CD4-positive, alpha-beta T cell (primary cell): ENCODE measurements at regions of chr14 and their contacts with region 1.

Region 1: GRCh38 chr14:20682435-20683124 is 1.8 kb upstream of the RNASE4 start:
- DNase-seq: peak; percentile 62 to 93 (median 74)
- ATAC-seq: peak; percentile 60
- H3K4me3 ChIP-seq: peak overlapping the region; percentile 79
- H3K4me3 Mint-ChIP-seq: no peak overlapping the region
- H3K27ac ChIP-seq: peak overlapping the region; percentile 94 to 95
- H3K27ac Mint-ChIP-seq: no peak overlapping the region
- H3K4me1 ChIP-seq: peaks cover 53% of the 10 kb centered on the region
- H3K4me1 Mint-ChIP-seq: peaks cover 5% of the 10 kb centered on the region
- H3K27me3 ChIP-seq: no peaks in the 10 kb centered on the region
- H3K27me3 Mint-ChIP-seq: peaks cover 7% of the 10 kb centered on the region
- CTCF ChIP-seq: no peak

Region 2: GRCh38 chr14:20332788-20333493 is 349.6 kb before region 1 on chr14 and contains the start of gene CCNB1IP1:
- CTCF ChIA-PET with region 1: interaction called, 4 read pairs
- POLR2A ChIA-PET with region 1: interaction called, 17 read pairs
- intact Hi-C with region 1: no loop called
- DNase-seq: peak in 13 of 14 experiments; percentile 5 to 91 (median 26)
- ATAC-seq: peak; percentile 99
- H3K4me3 ChIP-seq: peak within 1 kb of the TSS; percentile 75
- H3K4me3 Mint-ChIP-seq: peak within 1 kb of the TSS; percentile 94
- H3K27ac ChIP-seq: peak within 1 kb of the TSS; percentile 3 to 59
- H3K27ac Mint-ChIP-seq: peak within 1 kb of the TSS; percentile 84
- H3K4me1 ChIP-seq: peaks cover 12% of the 10 kb centered on the region
- H3K4me1 Mint-ChIP-seq: peaks cover 34% of the 10 kb centered on the region
- H3K27me3 ChIP-seq: no peaks in the 10 kb centered on the region
- H3K27me3 Mint-ChIP-seq: no peaks in the 10 kb centered on the region
- CTCF ChIP-seq: no peak
- total RNA-seq, gene CCNB1IP1: 26.2 to 27.4 TPM

Region 3: DNA sequence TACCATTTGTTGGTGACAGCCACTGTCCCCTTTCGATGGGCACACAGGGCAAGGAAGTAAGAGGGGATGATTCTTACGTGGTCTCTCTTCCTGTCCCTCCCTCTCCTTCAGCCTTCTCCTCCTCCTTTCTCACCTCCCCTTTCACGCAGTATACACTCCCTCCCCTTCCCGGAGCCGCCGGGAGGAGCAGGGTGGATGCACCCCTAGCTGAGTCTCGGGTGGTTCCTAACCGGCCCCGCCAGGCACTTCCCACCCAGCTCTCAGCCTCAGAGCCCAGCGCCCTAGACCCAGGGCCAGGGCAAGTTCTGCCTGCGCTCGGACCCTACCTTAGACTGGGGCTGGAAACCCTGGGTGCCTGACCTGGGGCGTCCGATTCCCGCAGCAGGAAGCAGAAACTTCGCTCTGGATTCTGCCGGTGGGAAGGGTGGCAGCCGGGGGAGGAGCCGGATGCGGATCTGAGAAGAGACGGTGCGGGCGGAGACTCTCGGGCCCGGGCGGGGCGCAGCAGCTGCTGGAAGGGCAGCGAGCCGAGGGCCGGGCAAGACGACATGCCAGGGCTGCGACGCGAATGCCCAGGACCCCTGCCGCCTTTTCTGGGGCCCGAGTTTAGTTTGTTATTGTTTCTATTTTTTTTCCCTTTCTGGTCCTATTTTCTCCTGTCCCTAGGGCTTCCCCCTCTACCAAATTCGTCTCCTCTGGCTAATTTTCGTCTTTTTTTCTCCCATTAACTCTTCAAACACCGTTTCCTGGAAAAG is 269.4 kb before region 1 on chr14 and contains the start of gene TEP1:
- CTCF ChIA-PET with region 1: no interaction called
- POLR2A ChIA-PET with region 1: interaction called, 5 read pairs
- intact Hi-C with region 1: loop called in 1 of 2 experiments (anchors 5 kb)
- DNase-seq: peak; percentile 47 to 81 (median 66)
- ATAC-seq: peak; percentile 72
- H3K4me3 ChIP-seq: peak within 1 kb of the TSS; percentile 96
- H3K4me3 Mint-ChIP-seq: peak within 1 kb of the TSS; percentile 98
- H3K27ac ChIP-seq: peak within 1 kb of the TSS; percentile 80 to 90
- H3K27ac Mint-ChIP-seq: peak within 1 kb of the TSS; percentile 80
- H3K4me1 ChIP-seq: peaks cover 19% of the 10 kb centered on the region
- H3K4me1 Mint-ChIP-seq: peaks cover 49% of the 10 kb centered on the region
- H3K27me3 ChIP-seq: no peaks in the 10 kb centered on the region
- H3K27me3 Mint-ChIP-seq: no peaks in the 10 kb centered on the region
- CTCF ChIP-seq: no peak
- total RNA-seq, gene TEP1: 14.3 to 17.4 TPM

Region 4: DNA sequence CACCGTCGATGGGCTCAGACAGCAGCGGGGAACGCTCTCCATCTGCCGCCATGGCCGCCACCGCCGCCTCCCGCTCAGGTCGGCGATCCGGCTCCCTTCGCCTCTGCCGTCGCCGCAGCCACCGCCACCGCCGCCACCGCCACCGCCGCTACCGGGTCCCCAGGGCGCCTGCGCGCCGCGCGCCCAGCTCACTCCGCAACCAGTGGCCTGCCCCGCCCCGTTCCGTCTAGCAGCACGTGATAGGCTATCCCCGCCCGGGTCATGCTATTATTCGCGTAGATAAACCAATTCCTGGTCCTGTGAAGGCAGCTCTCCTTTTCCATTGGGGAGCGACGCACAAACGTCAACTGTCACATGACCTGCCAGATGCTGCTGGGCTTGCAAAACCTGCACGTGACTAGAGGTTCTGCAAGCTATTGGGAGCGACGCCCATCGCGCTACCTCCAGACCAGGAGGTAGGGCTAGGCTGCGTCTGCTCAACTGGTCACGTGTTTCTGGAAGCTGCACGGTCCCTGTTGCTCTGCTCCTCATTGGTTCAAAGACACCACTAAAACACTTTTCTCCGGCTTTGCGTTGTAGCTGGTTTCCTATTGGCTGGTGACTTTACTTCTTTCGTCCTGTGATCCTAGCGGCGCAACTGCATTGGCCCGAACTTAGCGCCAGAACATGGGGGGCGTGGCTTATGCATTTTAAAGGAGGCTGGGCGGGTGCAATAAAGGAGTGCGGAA is 221.1 kb before region 1 on chr14 and contains the start of gene PIP4P1:
- CTCF ChIA-PET with region 1: no interaction called
- POLR2A ChIA-PET with region 1: interaction called, 43 read pairs
- intact Hi-C with region 1: loop called in 1 of 2 experiments (anchors 2 kb)
- DNase-seq: peak; percentile 94 to 100 (median 97)
- ATAC-seq: peak; percentile 86
- H3K4me3 ChIP-seq: peak within 1 kb of the TSS; percentile 69
- H3K4me3 Mint-ChIP-seq: peak within 1 kb of the TSS; percentile 95
- H3K27ac ChIP-seq: peak within 1 kb of the TSS; percentile 94 to 97
- H3K27ac Mint-ChIP-seq: peak within 1 kb of the TSS; percentile 87
- H3K4me1 ChIP-seq: peaks cover 41% of the 10 kb centered on the region
- H3K4me1 Mint-ChIP-seq: peaks cover 26% of the 10 kb centered on the region
- H3K27me3 ChIP-seq: no peaks in the 10 kb centered on the region
- H3K27me3 Mint-ChIP-seq: no peaks in the 10 kb centered on the region
- CTCF ChIP-seq: no peak
- total RNA-seq, gene PIP4P1: 83.9 to 107 TPM

Region 5: GRCh38 chr14:20652996-20653975 is 29.3 kb before region 1 on chr14:
- CTCF ChIA-PET with region 1: interaction called, 4 read pairs
- POLR2A ChIA-PET with region 1: interaction called, 13 read pairs
- intact Hi-C with region 1: no loop called
- DNase-seq: peak in 7 of 14 experiments; percentile 27 to 68 (median 36)
- ATAC-seq: peak; percentile 51
- H3K4me3 ChIP-seq: peak overlapping the region; percentile 3
- H3K4me3 Mint-ChIP-seq: peak overlapping the region; percentile 52
- H3K27ac ChIP-seq: no peak overlapping the region
- H3K27ac Mint-ChIP-seq: peak overlapping the region; percentile 5
- H3K4me1 ChIP-seq: peaks cover 22% of the 10 kb centered on the region
- H3K4me1 Mint-ChIP-seq: peaks cover 27% of the 10 kb centered on the region
- H3K27me3 ChIP-seq: peaks cover 36 to 58% of the 10 kb centered on the region in 2 experiments
- H3K27me3 Mint-ChIP-seq: peaks cover 75% of the 10 kb centered on the region
- CTCF ChIP-seq: no peak

Region 6: GRCh38 chr14:20799892-20800544 is 117.4 kb after region 1 on chr14:
- CTCF ChIA-PET with region 1: no interaction called
- POLR2A ChIA-PET with region 1: no interaction called
- intact Hi-C with region 1: no loop called
- DNase-seq: peak in 2 of 14 experiments; percentile 14 to 31
- ATAC-seq: no peak
- H3K4me3 ChIP-seq: no peak overlapping the region
- H3K4me3 Mint-ChIP-seq: no peak overlapping the region
- H3K27ac ChIP-seq: no peak overlapping the region
- H3K27ac Mint-ChIP-seq: no peak overlapping the region
- H3K4me1 ChIP-seq: peaks cover 3% of the 10 kb centered on the region
- H3K4me1 Mint-ChIP-seq: peaks cover 7% of the 10 kb centered on the region
- H3K27me3 ChIP-seq: no peaks in the 10 kb centered on the region
- H3K27me3 Mint-ChIP-seq: peaks cover 6% of the 10 kb centered on the region
- CTCF ChIP-seq: no peak

Region 7: GRCh38 chr14:21092273-21093011 is 409.9 kb after region 1 on chr14:
- CTCF ChIA-PET with region 1: no interaction called
- POLR2A ChIA-PET with region 1: no interaction called
- intact Hi-C with region 1: loop called in 1 of 2 experiments (anchors 1 kb)
- DNase-seq: peak; percentile 84 to 97 (median 93)
- ATAC-seq: peak; percentile 80
- H3K4me3 ChIP-seq: no peak overlapping the region
- H3K4me3 Mint-ChIP-seq: peak overlapping the region; percentile 38
- H3K27ac ChIP-seq: no peak overlapping the region
- H3K27ac Mint-ChIP-seq: peak overlapping the region; percentile 56
- H3K4me1 ChIP-seq: peaks cover 29% of the 10 kb centered on the region
- H3K4me1 Mint-ChIP-seq: peaks cover 39% of the 10 kb centered on the region
- H3K27me3 ChIP-seq: no peaks in the 10 kb centered on the region
- H3K27me3 Mint-ChIP-seq: no peaks in the 10 kb centered on the region
- CTCF ChIP-seq: peak; percentile 100